CD8-positive, alpha-beta T cell (primary cell): ENCODE measurements at regions of chr19 and their contacts with region 1.

Region 1: DNA sequence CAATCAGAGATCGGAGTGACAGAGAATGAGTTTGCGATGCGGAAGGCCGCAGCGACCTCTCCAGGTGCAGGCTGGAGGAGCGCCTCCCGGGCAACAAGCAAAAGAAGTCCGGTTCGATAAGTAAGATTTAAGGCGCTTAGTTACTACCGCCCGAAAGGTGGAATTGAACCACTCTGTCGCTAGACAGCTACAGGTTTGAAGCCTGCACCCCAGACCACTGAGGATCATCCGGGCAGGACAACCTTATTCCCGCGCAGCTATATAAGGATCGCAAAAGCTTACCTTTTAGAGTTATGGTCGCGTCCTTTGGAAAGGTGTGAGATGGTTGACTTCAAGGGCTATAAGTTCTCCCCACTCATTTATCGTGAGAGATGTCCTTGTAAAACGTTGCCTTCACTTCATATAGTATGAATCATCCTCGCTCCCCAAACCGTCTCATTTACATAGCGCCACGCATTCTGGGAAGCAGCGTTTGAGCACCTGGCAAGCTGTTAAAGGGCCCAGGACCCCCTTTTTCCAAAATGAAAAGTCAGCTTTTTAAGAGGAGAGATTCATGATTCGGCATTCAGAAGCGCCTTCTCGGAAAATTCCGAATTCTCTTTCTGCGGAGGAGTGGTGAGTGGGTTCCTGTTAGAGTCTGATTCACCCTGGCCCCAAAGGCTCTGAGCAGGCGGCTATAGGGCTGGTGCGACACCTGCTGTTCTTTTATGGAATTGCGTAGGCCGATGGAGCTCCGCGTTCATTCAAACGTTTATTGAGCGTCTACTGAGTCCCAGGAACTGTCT is 10.8 kb downstream of the FOSB start:
- DNase-seq: peak; percentile 82 to 94 (median 89)
- ATAC-seq: peak; percentile 78
- H3K4me3 ChIP-seq: peak overlapping the region; percentile 57 to 74
- H3K4me3 Mint-ChIP-seq: peak overlapping the region; percentile 87
- H3K27ac ChIP-seq: peak overlapping the region; percentile 88 to 99
- H3K27ac Mint-ChIP-seq: peak overlapping the region; percentile 98
- H3K4me1 ChIP-seq: peaks cover 10% of the 10 kb centered on the region
- H3K4me1 Mint-ChIP-seq: peaks cover 25% of the 10 kb centered on the region
- H3K27me3 ChIP-seq: no peaks in the 10 kb centered on the region
- H3K27me3 Mint-ChIP-seq: no peaks in the 10 kb centered on the region
- CTCF ChIP-seq: peak; percentile 76

Region 2: DNA sequence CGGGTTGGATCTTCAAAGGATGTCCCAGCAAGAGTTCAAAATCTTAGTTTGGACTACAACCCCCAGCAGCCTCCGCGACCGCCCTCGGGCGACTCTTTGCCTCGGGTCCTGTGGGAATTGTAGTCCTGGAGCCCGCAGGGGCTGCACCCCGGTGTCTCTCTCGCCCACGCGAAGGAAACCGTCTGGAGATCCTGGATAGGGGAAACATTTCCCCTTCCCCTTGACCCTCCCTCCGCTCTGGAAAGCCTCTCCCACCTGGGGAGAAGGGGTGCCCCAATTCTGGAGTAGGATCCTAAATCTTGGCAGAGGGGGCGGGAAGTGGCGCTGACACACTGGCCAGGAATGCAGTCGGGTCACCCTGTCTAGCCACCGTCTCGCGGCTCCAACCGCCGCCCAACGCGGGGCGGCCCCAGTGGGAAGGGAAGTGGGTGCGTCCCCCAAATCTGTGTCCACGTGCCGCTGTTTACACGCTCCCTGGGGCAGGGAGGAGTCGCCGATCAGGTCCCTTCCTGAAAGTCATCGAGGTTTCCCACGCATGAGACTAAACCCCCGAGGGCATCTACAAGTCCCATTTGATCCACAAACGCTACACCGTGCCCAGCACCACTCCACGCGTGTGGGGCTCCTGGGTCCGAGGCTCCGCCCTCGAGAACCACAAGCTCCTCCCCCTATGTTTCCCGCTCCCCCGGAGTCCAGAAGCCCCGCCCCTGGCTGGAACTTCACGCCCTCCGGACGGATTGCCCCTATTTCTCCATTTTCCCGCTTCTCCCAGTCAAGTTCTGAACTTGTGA is 73.0 kb before region 1 on chr19:
- CTCF ChIA-PET with region 1: interaction called, 9 read pairs
- POLR2A ChIA-PET with region 1: no interaction called
- intact Hi-C with region 1: loop called (anchors 1 kb)
- DNase-seq: peak; percentile 69 to 89 (median 85)
- ATAC-seq: peak; percentile 63
- H3K4me3 ChIP-seq: peak overlapping the region; percentile 63 to 85
- H3K4me3 Mint-ChIP-seq: peak overlapping the region; percentile 97
- H3K27ac ChIP-seq: peak overlapping the region; percentile 68 to 92
- H3K27ac Mint-ChIP-seq: peak overlapping the region; percentile 95
- H3K4me1 ChIP-seq: peaks cover 25% of the 10 kb centered on the region
- H3K4me1 Mint-ChIP-seq: peaks cover 31% of the 10 kb centered on the region
- H3K27me3 ChIP-seq: peaks cover 16 to 26% of the 10 kb centered on the region in 2 experiments
- H3K27me3 Mint-ChIP-seq: peaks cover 26% of the 10 kb centered on the region
- CTCF ChIP-seq: no peak

Region 3: GRCh38 chr19:45423589-45424190 is 55.0 kb before region 1 on chr19 and contains the start of gene ERCC1:
- CTCF ChIA-PET with region 1: interaction called, 32 read pairs
- POLR2A ChIA-PET with region 1: interaction called, 5 read pairs
- intact Hi-C with region 1: loop called (anchors 1 kb)
- DNase-seq: peak in 6 of 9 experiments; percentile 35 to 84 (median 48)
- ATAC-seq: peak; percentile 57
- H3K4me3 ChIP-seq: peak within 1 kb of the TSS; percentile 72 to 95
- H3K4me3 Mint-ChIP-seq: peak within 1 kb of the TSS; percentile 93
- H3K27ac ChIP-seq: peak within 1 kb of the TSS; percentile 48 to 88
- H3K27ac Mint-ChIP-seq: peak within 1 kb of the TSS; percentile 90
- H3K4me1 ChIP-seq: peaks cover 32% of the 10 kb centered on the region
- H3K4me1 Mint-ChIP-seq: peaks cover 55% of the 10 kb centered on the region
- H3K27me3 ChIP-seq: no peaks in the 10 kb centered on the region
- H3K27me3 Mint-ChIP-seq: peaks cover 2% of the 10 kb centered on the region
- CTCF ChIP-seq: no peak
- total RNA-seq, gene ERCC1: 28.7 to 31.5 TPM

Region 4: DNA sequence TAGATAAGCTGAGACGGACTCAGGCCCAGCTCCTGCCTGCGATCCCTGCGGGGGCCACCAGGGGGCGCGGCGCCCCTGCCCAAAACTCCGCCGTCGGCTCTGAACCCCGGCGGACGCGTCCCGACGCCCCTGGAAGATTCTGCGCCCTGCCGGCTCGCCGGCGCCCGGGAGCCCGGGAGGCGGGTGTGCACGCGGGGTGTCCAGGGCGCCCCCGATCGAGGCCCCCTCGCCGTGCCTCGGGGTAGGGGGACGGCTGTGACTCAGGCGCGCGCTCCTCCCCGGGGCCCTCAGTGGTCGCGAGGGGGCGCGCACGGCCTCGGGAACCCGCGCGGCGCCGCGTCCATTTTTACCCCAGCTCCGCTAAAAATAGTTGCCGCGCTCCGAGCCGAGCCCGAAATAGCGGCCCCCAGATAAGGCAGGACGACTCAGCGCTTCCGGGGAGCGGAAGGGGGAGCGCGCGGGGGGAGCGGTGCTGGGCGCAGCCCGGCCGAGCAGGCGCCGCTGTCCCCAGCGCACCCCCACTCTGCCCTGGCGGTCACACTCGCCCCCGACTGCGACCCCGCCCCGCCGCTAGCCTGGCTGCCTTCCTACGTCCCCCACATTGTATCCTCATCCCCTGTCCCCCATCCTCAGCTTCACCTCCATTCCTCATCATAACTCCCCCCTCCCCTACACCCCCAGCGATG is 38.9 kb before region 1 on chr19:
- CTCF ChIA-PET with region 1: interaction called, 317 read pairs
- POLR2A ChIA-PET with region 1: interaction called, 83 read pairs
- intact Hi-C with region 1: loop called (anchors 1 kb)
- DNase-seq: peak; percentile 76 to 94 (median 86)
- ATAC-seq: peak; percentile 70
- H3K4me3 ChIP-seq: peak overlapping the region; percentile 23 to 71
- H3K4me3 Mint-ChIP-seq: peak overlapping the region; percentile 74
- H3K27ac ChIP-seq: peak overlapping the region; percentile 65 to 81
- H3K27ac Mint-ChIP-seq: no peak overlapping the region
- H3K4me1 ChIP-seq: peaks cover 37% of the 10 kb centered on the region
- H3K4me1 Mint-ChIP-seq: peaks cover 30% of the 10 kb centered on the region
- H3K27me3 ChIP-seq: no peaks in the 10 kb centered on the region
- H3K27me3 Mint-ChIP-seq: no peaks in the 10 kb centered on the region
- CTCF ChIP-seq: peak; percentile 100

Region 5: DNA sequence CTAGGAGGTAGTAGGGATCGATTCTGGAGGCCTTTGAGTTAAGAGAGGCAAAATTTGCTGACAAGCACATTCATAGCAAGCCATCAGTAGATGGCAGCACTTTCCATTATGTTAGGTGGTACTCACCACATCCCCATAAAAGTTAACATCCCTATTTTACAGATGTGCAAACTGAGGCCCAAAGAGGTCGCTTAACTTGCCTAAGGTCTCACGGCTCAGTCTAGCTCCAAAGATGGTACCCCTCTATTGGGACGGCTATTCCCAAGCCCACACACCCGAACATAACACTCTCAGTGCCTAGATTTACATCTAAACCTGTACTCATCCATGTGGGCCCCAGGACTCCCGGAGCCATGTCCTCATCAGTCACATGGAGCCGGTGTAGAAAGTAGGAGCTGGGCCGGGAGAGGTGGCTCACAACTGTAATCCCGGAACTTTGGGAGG is 32.3 kb before region 1 on chr19:
- CTCF ChIA-PET with region 1: interaction called, 317 read pairs
- POLR2A ChIA-PET with region 1: interaction called, 83 read pairs
- intact Hi-C with region 1: loop called in 1 of 2 experiments (anchors 1 kb)
- DNase-seq: peak in 3 of 9 experiments; percentile 22 to 76 (median 65)
- ATAC-seq: no peak
- H3K4me3 ChIP-seq: no peak overlapping the region
- H3K4me3 Mint-ChIP-seq: peak overlapping the region; percentile 35
- H3K27ac ChIP-seq: peak overlapping the region in 1 of 2 experiments; percentile 41
- H3K27ac Mint-ChIP-seq: no peak overlapping the region
- H3K4me1 ChIP-seq: peaks cover 45% of the 10 kb centered on the region
- H3K4me1 Mint-ChIP-seq: peaks cover 56% of the 10 kb centered on the region
- H3K27me3 ChIP-seq: no peaks in the 10 kb centered on the region
- H3K27me3 Mint-ChIP-seq: no peaks in the 10 kb centered on the region
- CTCF ChIP-seq: peak; percentile 20

Region 6: GRCh38 chr19:45455707-45456499 is 22.7 kb before region 1 on chr19:
- CTCF ChIA-PET with region 1: interaction called, 10 read pairs
- POLR2A ChIA-PET with region 1: no interaction called
- intact Hi-C with region 1: no loop called
- DNase-seq: peak; percentile 17 to 90 (median 69)
- ATAC-seq: peak; percentile 50
- H3K4me3 ChIP-seq: peak overlapping the region in 1 of 2 experiments; percentile 2
- H3K4me3 Mint-ChIP-seq: peak overlapping the region; percentile 35
- H3K27ac ChIP-seq: peak overlapping the region in 1 of 2 experiments; percentile 3
- H3K27ac Mint-ChIP-seq: peak overlapping the region; percentile 82
- H3K4me1 ChIP-seq: peaks cover 26% of the 10 kb centered on the region
- H3K4me1 Mint-ChIP-seq: peaks cover 29% of the 10 kb centered on the region
- H3K27me3 ChIP-seq: no peaks in the 10 kb centered on the region
- H3K27me3 Mint-ChIP-seq: peaks cover 2% of the 10 kb centered on the region
- CTCF ChIP-seq: no peak

Region 7: GRCh38 chr19:45496349-45496953 is 17.8 kb after region 1 on chr19:
- CTCF ChIA-PET with region 1: interaction called, 32 read pairs
- POLR2A ChIA-PET with region 1: interaction called, 6 read pairs
- intact Hi-C with region 1: no loop called
- DNase-seq: peak in 6 of 9 experiments; percentile 37 to 68 (median 58)
- ATAC-seq: peak; percentile 16
- H3K4me3 ChIP-seq: peak overlapping the region; percentile 57 to 75
- H3K4me3 Mint-ChIP-seq: peak overlapping the region; percentile 74
- H3K27ac ChIP-seq: no peak overlapping the region
- H3K27ac Mint-ChIP-seq: no peak overlapping the region
- H3K4me1 ChIP-seq: peaks cover 45% of the 10 kb centered on the region
- H3K4me1 Mint-ChIP-seq: peaks cover 37% of the 10 kb centered on the region
- H3K27me3 ChIP-seq: peaks cover 0 to 4% of the 10 kb centered on the region in 2 experiments
- H3K27me3 Mint-ChIP-seq: peaks cover 21% of the 10 kb centered on the region
- CTCF ChIP-seq: no peak